ENCODE measurements at regions of chr7 and their contacts with region 1.

Region 1: GRCh38 chr7:22885797-22886261 is 63.2 kb upstream of the TOMM7 start:
- DNase-seq: peak; percentile 81
- H3K4me3 Mint-ChIP-seq: peak overlapping the region; percentile 45
- H3K27ac Mint-ChIP-seq: peak overlapping the region; percentile 88
- H3K4me1 Mint-ChIP-seq: peaks cover 39% of the 10 kb centered on the region
- H3K27me3 Mint-ChIP-seq: no peaks in the 10 kb centered on the region

Region 2: DNA sequence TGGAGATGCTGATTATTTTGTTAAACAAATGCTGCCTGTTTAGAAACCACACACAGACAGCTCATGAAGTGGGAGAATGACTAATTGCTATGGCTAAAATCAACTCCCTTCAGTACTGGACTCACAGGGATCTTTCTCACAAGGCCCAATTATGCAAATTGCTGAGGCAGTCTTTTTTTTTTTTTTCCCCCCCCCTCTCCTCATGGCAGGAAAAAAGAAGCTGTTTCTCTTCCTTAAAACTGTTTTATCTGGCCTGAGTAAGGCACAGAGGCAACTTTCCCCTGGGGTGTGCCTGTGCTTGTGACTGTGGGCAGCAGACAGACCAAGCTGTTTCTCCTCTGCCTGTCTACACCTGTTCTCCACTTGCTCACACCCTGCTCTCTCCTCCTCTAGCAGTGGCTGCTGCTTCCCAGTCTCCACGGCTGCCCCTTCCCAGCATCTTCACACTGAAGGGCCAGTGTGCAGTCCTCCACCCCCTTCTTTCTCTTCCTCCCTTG is 320.5 kb before region 1 on chr7:
- CTCF ChIA-PET with region 1: interaction called, 4 read pairs
- POLR2A ChIA-PET with region 1: no interaction called
- intact Hi-C with region 1: loop called (anchors 2 kb)
- DNase-seq: no peak
- H3K4me3 Mint-ChIP-seq: no peak overlapping the region
- H3K27ac Mint-ChIP-seq: no peak overlapping the region
- H3K4me1 Mint-ChIP-seq: peaks cover 51% of the 10 kb centered on the region
- H3K27me3 Mint-ChIP-seq: peaks cover 39% of the 10 kb centered on the region

Region 3: DNA sequence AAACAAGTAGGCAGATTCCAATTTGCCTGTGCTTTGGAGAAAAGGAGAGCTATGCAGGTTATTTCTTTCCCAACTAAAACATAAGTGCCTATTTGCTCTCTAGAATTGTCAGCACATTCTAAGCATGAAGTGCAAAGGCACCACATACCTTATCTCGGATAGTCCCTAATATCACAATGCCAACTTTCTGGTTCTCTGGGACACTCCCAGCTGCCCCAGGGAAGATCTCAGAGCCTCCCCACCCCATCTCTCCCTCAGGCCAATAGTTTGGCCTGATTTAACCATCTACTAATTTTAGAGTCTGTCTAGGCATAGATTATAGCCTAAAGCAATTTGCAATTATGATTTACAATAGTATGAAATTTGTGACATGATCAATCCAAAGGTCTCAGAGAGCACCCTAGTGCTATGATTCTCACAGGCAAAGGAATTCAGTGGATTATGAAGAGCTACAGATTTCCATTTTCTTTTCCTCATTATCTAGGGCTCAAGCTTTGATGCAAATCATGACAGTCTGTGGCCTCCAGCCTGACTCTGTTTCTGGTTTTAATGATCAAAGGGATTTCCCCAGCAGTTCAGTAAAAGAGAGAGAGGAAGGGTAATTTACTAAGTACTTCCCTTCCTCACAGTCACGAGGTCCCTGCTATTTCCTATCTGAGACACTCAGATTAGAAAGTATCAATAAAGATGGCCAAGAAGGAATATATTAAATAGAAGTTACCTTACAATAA is 187.8 kb before region 1 on chr7:
- CTCF ChIA-PET with region 1: no interaction called
- POLR2A ChIA-PET with region 1: interaction called, 3 read pairs
- intact Hi-C with region 1: loop called (anchors 1 kb)
- DNase-seq: peak; percentile 36
- H3K4me3 Mint-ChIP-seq: peak overlapping the region; percentile 13
- H3K27ac Mint-ChIP-seq: peak overlapping the region; percentile 85
- H3K4me1 Mint-ChIP-seq: peaks cover 66% of the 10 kb centered on the region
- H3K27me3 Mint-ChIP-seq: peaks cover 2% of the 10 kb centered on the region

Region 4: GRCh38 chr7:22723181-22723601 is 162.6 kb before region 1 on chr7:
- CTCF ChIA-PET with region 1: no interaction called
- POLR2A ChIA-PET with region 1: no interaction called
- intact Hi-C with region 1: no loop called
- DNase-seq: no peak
- H3K4me3 Mint-ChIP-seq: no peak overlapping the region
- H3K27ac Mint-ChIP-seq: no peak overlapping the region
- H3K4me1 Mint-ChIP-seq: peaks cover 22% of the 10 kb centered on the region
- H3K27me3 Mint-ChIP-seq: peaks cover 21% of the 10 kb centered on the region

Region 5: GRCh38 chr7:22854158-22855048 is 31.4 kb before region 1 on chr7:
- CTCF ChIA-PET with region 1: interaction called, 5 read pairs
- POLR2A ChIA-PET with region 1: interaction called, 4 read pairs
- intact Hi-C with region 1: loop called (anchors 1 kb)
- DNase-seq: no peak
- H3K4me3 Mint-ChIP-seq: peak overlapping the region; percentile 93
- H3K27ac Mint-ChIP-seq: peak overlapping the region; percentile 93
- H3K4me1 Mint-ChIP-seq: peaks cover 34% of the 10 kb centered on the region
- H3K27me3 Mint-ChIP-seq: peaks cover 2% of the 10 kb centered on the region

Region 6: DNA sequence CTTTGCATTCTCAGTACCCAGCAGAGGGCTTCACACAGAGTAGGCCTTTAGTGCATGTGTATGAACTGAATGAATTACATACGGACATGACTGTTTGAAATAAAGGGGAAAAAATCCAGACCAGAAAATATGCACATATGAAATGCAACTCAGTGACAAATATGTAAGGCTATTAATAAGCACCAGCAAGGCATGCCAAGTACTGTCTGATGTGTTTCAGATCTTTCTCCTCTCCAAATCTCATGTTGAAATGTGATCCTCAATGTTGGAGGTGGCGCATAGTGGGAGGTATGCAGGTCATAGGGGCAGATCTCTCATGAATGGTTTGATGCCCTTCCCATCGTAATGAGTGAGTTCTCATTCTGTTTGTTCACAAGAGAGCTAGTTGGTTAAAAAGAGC is 24.1 kb after region 1 on chr7:
- CTCF ChIA-PET with region 1: no interaction called
- POLR2A ChIA-PET with region 1: no interaction called
- intact Hi-C with region 1: no loop called
- DNase-seq: no peak
- H3K4me3 Mint-ChIP-seq: no peak overlapping the region
- H3K27ac Mint-ChIP-seq: no peak overlapping the region
- H3K4me1 Mint-ChIP-seq: no peaks in the 10 kb centered on the region
- H3K27me3 Mint-ChIP-seq: no peaks in the 10 kb centered on the region

Region 7: DNA sequence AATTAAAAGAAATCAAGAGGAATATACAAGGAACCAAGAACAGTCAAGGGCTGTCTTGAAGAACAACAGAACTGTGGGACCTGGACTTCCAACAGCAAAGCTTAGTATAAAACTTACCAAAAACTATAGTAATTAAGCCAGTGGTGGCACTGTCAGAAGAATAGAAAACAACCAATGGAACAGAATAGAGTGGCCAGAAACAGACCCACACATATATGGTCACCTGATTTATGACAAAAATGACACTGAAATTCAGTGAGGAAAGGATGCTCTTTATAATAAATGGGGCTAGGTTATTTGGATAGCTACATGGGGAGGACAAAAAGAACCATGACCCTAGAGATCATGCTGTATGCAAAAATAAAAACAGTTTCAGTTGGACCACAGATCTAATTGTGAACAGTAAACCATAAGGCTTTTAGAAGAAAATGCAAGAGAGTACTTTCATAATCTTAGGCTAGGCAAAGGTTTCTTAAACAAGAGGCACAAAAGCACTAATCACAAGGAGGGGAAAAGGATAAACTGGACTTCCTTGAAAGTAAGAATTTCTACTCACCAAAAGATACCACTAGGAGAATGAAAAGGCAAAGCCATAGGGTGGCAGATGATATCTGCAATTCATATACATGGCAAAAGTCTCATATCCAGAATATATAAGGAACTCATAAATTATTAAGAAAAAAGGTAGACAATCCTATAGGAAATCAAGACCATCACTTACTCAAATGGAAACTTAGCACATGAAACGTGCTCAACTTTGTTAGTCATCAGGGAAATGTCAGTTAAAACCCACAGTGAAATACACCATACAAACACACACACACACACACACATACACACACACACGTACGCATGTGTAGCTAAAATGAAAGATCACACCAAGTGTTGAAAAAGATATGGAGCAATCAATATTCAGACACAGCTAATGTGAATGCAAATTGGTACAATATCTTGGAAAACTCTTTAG is 107.3 kb after region 1 on chr7:
- CTCF ChIA-PET with region 1: no interaction called
- POLR2A ChIA-PET with region 1: interaction called, 8 read pairs
- intact Hi-C with region 1: loop called (anchors 1 kb)
- DNase-seq: peak; percentile 48
- H3K4me3 Mint-ChIP-seq: no peak overlapping the region
- H3K27ac Mint-ChIP-seq: no peak overlapping the region
- H3K4me1 Mint-ChIP-seq: peaks cover 41% of the 10 kb centered on the region
- H3K27me3 Mint-ChIP-seq: no peaks in the 10 kb centered on the region

Region 8: DNA sequence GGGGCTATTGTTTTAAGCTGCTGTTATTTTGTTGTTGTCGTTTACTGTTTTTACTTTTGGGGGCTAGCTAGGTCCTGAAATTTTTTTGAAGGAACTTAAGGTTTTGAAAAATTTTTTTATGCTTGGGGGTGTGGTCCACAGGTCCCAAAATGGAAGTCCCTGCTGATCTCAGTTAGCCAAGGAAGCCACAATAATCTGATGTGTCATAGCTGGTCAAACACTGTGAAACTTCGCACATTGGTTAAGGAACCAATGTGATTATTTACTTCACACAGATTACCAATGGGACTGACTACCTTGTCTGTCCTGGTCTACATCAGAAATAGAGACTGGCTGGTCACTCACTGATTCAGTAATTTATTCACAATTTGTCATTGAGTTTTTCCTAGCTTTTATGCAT is 157.6 kb after region 1 on chr7:
- CTCF ChIA-PET with region 1: no interaction called
- POLR2A ChIA-PET with region 1: no interaction called
- intact Hi-C with region 1: no loop called
- DNase-seq: no peak
- H3K4me3 Mint-ChIP-seq: no peak overlapping the region
- H3K27ac Mint-ChIP-seq: no peak overlapping the region
- H3K4me1 Mint-ChIP-seq: no peaks in the 10 kb centered on the region
- H3K27me3 Mint-ChIP-seq: no peaks in the 10 kb centered on the region

Measured in activated CD4-positive, alpha-beta memory T cell treated with anti-CD3 and anti-CD28 coated beads for 36 hours (primary cell).